ENCODE measurements at regions of chr9 and their contacts with region 1.

Region 1: GRCh38 chr9:21334701-21335632 is at the start of gene KLHL9:
- DNase-seq: peak; percentile 91 to 93
- H3K4me3 ChIP-seq: peak within 1 kb of the TSS; percentile 64 to 66
- H3K27ac ChIP-seq: peak within 1 kb of the TSS; percentile 86 to 94
- H3K4me1 ChIP-seq: peaks cover 8 to 15% of the 10 kb centered on the region in 2 donors
- H3K27me3 ChIP-seq: no peaks in the 10 kb centered on the region
- CTCF ChIP-seq: peak in 1 of 4 experiments; percentile 14
- POLR2A ChIP-seq: peak in 1 of 2 donors; percentile 71
- total RNA-seq, gene KLHL9: 24.7 to 88.5 (median 29.9) TPM

Region 2: DNA sequence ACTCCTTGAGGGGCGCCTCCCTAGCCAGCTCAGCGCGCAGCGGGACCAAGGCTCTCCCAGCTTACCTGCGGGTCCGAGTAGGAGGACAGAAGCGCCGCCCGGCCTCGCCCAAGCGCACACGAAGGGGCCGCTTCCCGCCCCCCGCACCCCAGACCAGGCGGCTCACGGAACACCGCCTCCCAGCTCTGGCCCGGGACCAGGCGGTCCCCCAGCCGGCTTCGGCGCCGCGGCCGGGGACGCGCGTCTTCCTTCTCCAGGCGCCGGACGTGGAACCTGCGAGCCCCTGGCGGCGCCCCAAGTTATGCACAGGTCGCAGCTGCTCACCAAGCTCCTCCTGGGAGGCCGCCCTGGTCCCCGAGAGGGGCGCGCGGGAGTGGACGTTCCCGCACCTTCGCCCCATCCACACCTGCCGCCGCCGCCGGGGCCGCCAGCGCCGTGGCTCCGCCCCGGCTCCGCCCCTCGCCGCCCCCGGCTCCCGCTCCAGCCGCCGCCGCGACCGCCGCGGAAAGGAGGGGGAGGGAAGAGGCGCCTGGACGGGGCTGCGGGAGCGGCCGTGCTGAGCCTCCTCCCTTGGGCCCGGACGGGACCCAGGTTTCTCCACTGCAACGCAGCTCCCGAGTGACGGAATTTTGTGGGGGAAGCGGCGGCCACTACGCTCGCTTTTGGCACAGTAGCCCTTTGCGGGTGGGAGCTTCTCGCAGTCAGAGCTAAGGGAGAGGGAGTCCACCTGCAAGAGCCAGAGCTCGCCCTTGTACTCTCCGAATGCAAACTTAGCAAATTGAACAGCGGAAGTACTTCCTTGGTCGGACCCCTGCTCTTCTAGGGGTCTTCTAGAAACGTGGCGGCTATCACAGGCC is 224.7 kb after region 1 on chr9:
- intact Hi-C with region 1: no loop called
- DNase-seq: peak in 1 of 2 donors; percentile 20
- H3K4me3 ChIP-seq: peak overlapping the region in 1 of 2 donors; percentile 39
- H3K27ac ChIP-seq: no peak overlapping the region
- H3K4me1 ChIP-seq: peaks cover 0 to 5% of the 10 kb centered on the region in 2 donors
- H3K27me3 ChIP-seq: peaks cover 12 to 43% of the 10 kb centered on the region in 2 donors
- CTCF ChIP-seq: no peak
- POLR2A ChIP-seq: peak in 1 of 2 donors; percentile 50

Region 3: DNA sequence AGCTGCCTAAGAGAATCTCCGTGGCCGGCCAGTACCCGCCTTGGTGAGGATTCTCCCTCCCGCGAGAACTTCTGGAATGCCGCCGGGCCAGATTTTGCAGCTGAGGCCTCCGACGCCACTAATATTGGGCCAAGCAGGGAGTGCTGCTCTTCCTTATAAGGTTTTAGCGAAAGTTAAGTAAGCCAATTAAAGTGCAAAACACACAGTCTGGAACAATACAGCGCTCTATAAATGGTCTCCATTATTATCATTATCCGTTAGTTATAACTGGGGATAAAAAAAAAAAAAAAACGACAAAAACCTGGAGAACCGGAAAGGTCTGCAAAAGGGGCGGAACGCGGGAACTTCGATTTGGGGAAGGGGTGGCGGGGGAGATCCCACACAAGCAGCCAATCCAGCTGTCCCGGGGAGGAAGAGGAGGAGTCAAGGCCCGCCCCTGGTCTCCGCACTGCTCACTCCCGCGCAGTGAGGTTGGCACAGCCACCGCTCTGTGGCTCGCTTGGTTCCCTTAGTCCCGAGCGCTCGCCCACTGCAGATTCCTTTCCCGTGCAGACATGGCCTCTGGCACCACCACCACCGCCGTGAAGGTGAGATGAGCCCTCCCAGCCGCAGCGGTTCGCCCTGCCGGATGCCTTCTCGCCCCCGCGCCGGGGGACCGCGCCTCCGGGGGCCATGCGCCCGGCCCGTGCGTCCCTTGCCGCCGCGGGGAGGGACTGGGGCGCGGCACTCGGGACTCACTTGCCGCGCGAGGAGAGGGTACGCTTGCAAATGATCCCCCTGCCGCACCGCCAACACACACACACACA is 467.4 kb after region 1 on chr9 and contains the start of gene MTAP:
- intact Hi-C with region 1: loop called (anchors 10 kb)
- DNase-seq: peak; percentile 91 to 92
- H3K4me3 ChIP-seq: peak within 1 kb of the TSS; percentile 68 to 92
- H3K27ac ChIP-seq: peak within 1 kb of the TSS; percentile 93 to 94
- H3K4me1 ChIP-seq: peaks cover 0 to 3% of the 10 kb centered on the region in 2 donors
- H3K27me3 ChIP-seq: no peaks in the 10 kb centered on the region
- CTCF ChIP-seq: no peak
- POLR2A ChIP-seq: peak; percentile 56 to 81
- total RNA-seq, gene MTAP: 3.6 to 65.8 (median 39.4) TPM